Right ventricle myocardium superior (tissue), 1 donor: ENCODE measurements at regions of chr6 and their contacts with region 1.

Region 1: DNA sequence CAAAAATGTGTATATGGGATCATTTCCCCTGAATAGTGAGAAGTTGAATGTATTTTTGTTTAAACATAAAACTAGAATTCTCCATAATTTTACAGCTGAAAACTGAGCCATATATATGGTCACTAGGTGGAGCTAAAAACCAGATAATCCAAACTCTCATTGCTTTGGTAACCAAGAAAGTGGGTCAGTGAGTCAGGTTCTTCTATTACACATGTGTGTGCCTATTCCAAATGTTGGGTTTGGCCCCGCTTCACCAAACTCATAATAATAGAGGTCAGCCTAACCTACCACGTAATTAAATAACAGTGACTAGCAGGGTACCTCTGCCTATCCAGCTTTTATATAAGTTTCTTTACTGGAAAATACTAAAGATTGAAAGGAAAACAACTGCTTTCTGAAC is 19.3 kb upstream of the RNGTT start:
- DNase-seq: no peak
- ATAC-seq: peak; percentile 96

Region 2: DNA sequence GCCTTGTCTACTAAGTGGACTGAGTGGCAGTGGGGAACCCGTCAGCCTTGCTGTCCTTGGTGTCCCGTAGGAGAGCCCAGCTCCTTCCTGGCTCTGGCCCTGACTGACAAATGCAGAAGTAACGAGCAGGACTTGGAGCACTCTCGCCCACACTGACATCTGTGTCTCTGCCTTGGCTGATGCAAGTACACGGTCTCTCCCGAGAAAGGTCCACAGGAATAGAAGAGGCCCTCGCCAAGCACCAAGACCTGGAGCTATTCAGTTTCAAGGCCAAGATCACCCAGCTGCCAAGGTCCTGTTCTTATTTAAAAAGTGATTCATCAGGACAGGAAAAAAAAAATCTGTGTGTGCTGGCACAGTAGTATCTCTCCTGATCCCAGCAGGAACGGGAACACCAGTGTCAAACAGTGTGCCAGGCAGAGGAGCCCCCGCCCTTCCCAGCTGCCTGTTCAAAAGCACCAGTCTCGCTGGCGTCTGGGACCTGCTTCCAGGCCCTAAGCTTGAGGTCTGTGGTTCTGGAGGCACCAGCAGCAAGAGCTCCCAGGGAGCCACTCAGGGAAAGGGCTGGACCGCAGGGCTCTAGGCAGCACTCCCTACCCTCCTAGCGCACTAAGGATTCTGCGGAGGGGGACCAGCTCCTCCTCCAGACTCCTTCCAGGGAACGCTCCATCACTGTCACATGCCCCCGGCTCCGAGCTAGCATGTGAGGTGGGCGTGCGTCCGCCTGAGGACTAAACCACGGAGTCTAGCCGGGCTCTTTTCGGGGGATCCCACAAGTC is 396.2 kb before region 1 on chr6:
- intact Hi-C with region 1: no loop called
- DNase-seq: no peak
- ATAC-seq: no peak

Region 3: GRCh38 chr6:89035252-89036106 is 52.8 kb after region 1 on chr6:
- intact Hi-C with region 1: loop called (anchors 10 kb)
- DNase-seq: peak; percentile 85
- ATAC-seq: peak; percentile 95

Region 4: DNA sequence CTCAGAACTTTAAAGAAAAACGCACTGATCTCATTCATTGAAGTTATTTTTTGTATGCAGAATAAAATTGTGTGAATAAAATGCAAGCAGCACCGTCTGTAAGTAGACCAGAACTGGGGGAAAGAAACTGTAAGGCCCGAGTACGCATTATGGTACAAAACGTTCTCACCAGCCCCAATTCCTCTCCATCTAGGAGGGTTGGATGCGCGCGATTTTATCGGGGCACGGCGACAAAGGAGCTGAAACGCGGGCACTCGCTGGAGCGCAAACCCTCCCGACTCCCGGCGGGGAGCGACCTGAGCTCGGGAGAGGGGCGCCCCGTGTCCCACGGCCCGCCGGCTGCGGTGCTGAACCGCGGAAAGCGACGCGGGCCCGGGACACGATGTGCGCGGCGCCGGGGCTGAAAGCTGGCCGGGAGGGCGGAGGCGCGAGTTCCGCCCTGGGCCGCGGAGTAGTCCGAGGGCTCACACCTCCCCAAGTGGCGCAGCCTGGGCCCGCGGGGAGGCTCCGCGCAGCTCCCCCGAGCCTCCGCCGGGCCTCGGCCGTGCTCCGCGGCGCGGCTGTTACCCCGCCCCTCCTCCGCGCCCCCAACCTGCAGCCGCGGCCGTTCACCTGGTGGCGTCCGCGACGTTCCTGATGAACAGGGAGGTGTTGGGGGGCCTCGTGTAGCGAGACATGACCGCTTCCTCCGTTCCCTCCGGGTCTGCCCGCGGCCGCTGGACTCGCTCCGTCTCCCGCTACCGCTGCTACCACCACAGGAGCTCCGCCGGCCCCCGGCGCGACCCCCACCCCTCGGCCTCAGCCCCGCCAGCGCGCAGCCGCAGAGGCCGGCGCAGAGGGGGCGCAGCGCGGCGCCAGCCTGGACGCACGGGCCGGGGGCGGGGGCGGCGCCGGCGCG is 134.7 kb after region 1 on chr6 and contains the start of gene SRSF12:
- intact Hi-C with region 1: loop called (anchors 10 kb)
- DNase-seq: peak; percentile 66
- ATAC-seq: peak; percentile 90
- total RNA-seq, gene SRSF12: not detected

Region 5: GRCh38 chr6:89242574-89243330 is 260.0 kb after region 1 on chr6:
- intact Hi-C with region 1: loop called (anchors 5 kb)
- DNase-seq: no peak
- ATAC-seq: peak; percentile 56

Region 6: DNA sequence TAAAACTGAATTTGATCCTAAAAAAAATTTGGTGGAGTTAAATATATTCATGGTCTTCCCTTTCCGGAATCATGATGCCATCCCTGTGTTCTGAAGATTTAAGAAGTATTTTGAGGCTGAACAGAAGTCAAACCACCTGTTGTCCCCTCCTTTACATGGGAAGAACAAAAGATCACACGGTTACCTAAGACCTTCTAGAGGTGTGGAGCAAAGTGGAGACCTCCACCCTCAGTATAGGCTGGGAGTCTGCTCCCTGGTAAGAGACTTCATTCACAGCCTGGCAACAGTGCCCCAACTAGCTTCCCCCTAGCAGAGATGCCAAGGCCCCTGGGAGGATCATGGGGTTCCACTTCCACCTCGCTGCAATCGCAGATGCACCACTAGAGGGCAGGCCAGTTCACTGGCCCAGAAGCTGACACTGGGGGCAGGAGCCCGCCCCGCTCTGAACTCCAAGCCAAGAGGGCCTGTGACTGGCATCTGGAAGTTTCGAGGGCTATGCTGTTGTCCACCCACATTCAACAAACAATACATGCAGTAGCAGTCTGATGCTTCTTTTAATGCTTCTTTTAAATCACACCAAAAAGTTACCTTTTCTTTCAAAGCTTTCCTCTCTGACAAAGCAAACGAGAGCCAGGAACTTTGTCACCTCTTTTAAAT is 389.3 kb after region 1 on chr6:
- intact Hi-C with region 1: loop called (anchors 10 kb)
- DNase-seq: peak; percentile 84
- ATAC-seq: peak; percentile 89